H1 (cell line): ENCODE measurements at regions of chr5 and their contacts with region 1.

Region 1: DNA sequence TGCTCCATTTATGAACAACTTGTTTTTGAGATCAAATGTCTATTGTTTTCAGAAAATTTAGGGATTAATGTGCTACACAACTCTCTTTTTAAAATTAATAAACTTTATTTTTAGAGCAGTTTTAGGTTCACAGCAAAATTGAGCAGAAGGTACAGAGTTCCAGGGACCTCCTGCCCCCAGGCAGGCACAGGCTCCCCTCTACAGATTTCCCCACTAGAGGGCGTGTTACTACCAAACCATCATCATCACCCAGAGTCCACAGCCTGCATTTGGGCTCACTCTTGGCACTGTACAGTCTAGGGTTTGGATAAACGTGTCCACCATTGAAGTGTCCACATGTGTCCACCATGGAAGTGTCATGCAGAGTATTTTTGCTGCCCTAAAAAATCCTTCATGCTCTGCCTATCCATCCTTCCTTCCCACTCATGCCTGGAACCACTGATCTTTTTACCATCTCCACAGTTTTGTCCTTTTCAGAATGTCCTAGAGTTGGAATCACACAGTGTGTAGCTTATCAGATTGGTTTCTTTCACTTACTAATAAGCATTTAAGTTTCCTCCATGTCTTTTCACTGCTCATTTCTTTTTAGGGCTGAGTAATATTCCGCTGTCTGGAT is 61.7 kb downstream of the MRPL36 start:
- DNase-seq: peak in 1 of 2 experiments; percentile 61
- H3K4me3 ChIP-seq: no peak overlapping the region
- H3K27ac ChIP-seq: no peak overlapping the region
- H3K4me1 ChIP-seq: no peaks in the 10 kb centered on the region; a peak in 1 of 7 replicates
- H3K27me3 ChIP-seq: no peaks in the 10 kb centered on the region
- CTCF ChIP-seq: peak in 2 of 3 experiments; percentile 71 to 77; a peak in 3 of 4 replicates
- EP300 ChIP-seq: no peak
- POLR2A ChIP-seq: no peak
- RAD21 ChIP-seq: peak; percentile 66 to 72

Region 2: DNA sequence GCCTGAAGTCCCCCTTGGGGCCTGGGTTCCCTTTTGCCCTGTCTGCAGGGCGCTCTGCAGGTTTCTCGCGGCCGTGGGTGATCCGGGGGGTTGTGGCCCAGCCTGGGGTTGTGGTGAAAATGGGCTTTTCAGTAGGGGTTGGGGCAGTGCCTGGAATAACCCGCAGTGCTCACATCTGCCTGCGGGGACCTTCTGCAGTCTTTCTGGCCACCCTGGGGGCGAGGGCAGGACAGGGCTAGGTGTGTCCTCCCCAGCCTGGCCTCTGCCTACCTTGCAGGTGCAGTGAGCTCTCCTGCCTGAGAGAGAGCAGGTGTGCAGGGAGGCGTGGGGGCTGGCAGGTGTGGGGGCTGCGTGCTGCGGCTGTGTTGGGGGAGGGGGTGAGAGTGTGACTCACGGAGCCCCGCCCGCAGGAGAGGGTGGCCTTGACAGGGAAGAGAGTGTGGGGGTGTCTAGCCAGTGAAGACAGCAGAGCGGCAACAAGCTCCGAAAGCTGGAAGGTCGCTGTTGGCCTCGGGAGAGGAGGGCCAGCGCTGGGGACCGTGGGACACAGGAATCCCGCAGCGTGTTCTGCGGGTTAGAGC is 69.7 kb before region 1 on chr5:
- CTCF ChIA-PET with region 1: interaction called, 18 read pairs
- POLR2A ChIA-PET with region 1: no interaction called
- DNase-seq: no peak
- H3K4me3 ChIP-seq: peak overlapping the region; percentile 39 to 69 (median 49); a peak in 6 of 8 replicates
- H3K27ac ChIP-seq: no peak overlapping the region
- H3K4me1 ChIP-seq: peaks cover 0 to 20% (median 8%) of the 10 kb centered on the region in 4 experiments; a peak in 5 of 7 replicates
- H3K27me3 ChIP-seq: peaks cover 2 to 36% (median 23%) of the 10 kb centered on the region in 4 experiments
- CTCF ChIP-seq: no peak
- EP300 ChIP-seq: no peak
- POLR2A ChIP-seq: no peak
- RAD21 ChIP-seq: no peak

Region 3: GRCh38 chr5:1703352-1704050 is 34.4 kb before region 1 on chr5:
- CTCF ChIA-PET with region 1: interaction called, 14 read pairs
- POLR2A ChIA-PET with region 1: no interaction called
- DNase-seq: peak in 1 of 2 experiments; percentile 55
- H3K4me3 ChIP-seq: no peak overlapping the region
- H3K27ac ChIP-seq: no peak overlapping the region
- H3K4me1 ChIP-seq: peaks cover 0 to 10% (median under 1%) of the 10 kb centered on the region in 4 experiments; a peak in 2 of 7 replicates
- H3K27me3 ChIP-seq: peaks cover 0 to 2% (median 0%) of the 10 kb centered on the region in 4 experiments; a peak in 2 of 7 replicates
- CTCF ChIP-seq: peak; percentile 12 to 46 (median 21); a peak in 2 of 4 replicates
- EP300 ChIP-seq: no peak
- POLR2A ChIP-seq: no peak
- RAD21 ChIP-seq: peak; percentile 50 to 63

Region 4: GRCh38 chr5:1724822-1725643 is 12.9 kb before region 1 on chr5:
- CTCF ChIA-PET with region 1: interaction called, 32 read pairs
- POLR2A ChIA-PET with region 1: no interaction called
- DNase-seq: peak in 1 of 2 experiments; percentile 73
- H3K4me3 ChIP-seq: peak overlapping the region; percentile 27 to 53 (median 36)
- H3K27ac ChIP-seq: no peak overlapping the region
- H3K4me1 ChIP-seq: peaks cover 0 to 17% (median 14%) of the 10 kb centered on the region in 4 experiments; a peak in 6 of 7 replicates
- H3K27me3 ChIP-seq: peaks cover 0 to 9% (median 3%) of the 10 kb centered on the region in 4 experiments; a peak in 2 of 7 replicates
- CTCF ChIP-seq: no peak
- EP300 ChIP-seq: no peak
- POLR2A ChIP-seq: no peak
- RAD21 ChIP-seq: no peak

Region 5: DNA sequence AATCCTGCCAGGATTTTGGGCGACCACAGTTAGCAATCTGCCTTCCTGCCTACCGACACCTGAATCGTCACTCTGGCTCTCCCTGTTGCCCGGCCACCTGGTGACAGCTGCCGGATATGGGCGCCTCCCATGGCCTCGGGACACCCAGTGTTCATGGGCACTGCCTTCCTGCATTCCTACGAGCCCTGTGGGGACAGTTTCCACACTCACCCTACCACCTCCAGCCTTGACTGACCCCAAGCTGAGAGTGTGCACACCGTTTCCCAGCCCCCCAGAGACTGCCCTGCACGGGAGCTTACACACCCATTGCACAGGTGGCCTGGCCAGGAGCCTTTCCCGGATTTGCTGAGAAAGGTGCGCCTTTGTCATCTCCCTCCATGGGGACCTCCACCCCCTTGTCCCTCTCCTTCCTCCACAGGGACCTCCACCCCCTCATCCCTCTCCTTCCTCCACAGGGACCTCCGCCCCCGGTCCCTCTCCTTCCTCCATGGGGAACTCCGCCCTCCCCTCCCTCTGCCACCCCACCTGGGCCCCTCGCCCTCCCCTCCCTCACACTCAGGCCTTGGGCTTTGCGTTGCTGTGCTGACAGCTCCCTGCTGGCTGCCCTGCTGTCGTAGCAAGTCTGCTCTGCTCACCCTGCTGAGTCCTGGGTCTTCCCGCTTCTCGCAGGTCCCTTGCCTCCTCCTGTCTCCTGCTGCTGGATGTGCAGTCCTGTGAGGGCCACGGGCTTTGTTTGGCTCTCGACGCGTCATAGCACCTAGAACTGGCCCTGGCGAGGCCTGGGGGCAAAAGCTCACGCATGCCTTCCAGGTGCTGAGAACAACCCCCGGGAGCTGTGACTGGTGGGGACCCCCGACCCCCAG is 13.3 kb after region 1 on chr5:
- CTCF ChIA-PET with region 1: interaction called, 74 read pairs
- POLR2A ChIA-PET with region 1: no interaction called
- DNase-seq: peak in 1 of 2 experiments; percentile 47
- H3K4me3 ChIP-seq: no peak overlapping the region
- H3K27ac ChIP-seq: no peak overlapping the region
- H3K4me1 ChIP-seq: peaks cover 0 to 6% (median 3%) of the 10 kb centered on the region in 4 experiments; a peak in 2 of 7 replicates
- H3K27me3 ChIP-seq: no peaks in the 10 kb centered on the region
- CTCF ChIP-seq: no peak
- EP300 ChIP-seq: no peak
- POLR2A ChIP-seq: no peak
- RAD21 ChIP-seq: no peak